ENCODE measurements at regions of chr2 and their contacts with region 1.

Region 1: DNA sequence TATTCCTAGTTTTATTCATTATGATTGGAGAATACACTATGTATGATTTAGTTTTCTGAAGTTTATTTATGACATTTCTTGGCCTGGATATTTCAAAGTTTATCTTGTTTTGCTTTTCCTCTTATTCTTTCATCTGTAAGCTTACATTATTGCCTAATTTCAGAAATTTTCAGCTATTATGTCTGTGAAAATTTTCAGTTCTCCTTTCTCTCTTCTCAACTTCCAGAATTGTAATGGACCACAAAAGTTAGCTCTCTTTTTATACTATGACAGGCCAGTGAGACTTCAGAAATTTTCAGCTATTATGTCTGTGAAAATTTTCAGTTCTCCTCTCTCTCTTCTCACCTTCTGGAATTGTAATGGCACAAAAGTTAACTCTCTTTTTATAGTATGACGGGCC is 97.2 kb upstream of the SCN7A start:
- DNase-seq: no peak
- ATAC-seq: no peak
- H3K4me3 ChIP-seq: no peak overlapping the region
- H3K27ac ChIP-seq: no peak overlapping the region
- H3K4me1 ChIP-seq: no peaks in the 10 kb centered on the region
- H3K27me3 ChIP-seq: no peaks in the 10 kb centered on the region
- CTCF ChIP-seq: no peak
- POLR2A ChIP-seq: no peak

Region 2: GRCh38 chr2:166610180-166610912 is 19.1 kb after region 1 on chr2:
- in situ Hi-C with region 1: no loop called
- intact Hi-C with region 1: loop called (anchors 1 kb)
- DNase-seq: no peak
- ATAC-seq: no peak
- H3K4me3 ChIP-seq: no peak overlapping the region
- H3K27ac ChIP-seq: no peak overlapping the region
- H3K4me1 ChIP-seq: no peaks in the 10 kb centered on the region
- H3K27me3 ChIP-seq: no peaks in the 10 kb centered on the region
- CTCF ChIP-seq: no peak
- POLR2A ChIP-seq: no peak